Posterior cingulate gyrus (tissue), 11 donors: ENCODE measurements at regions of chr3 and their contacts with region 1.

Region 1: DNA sequence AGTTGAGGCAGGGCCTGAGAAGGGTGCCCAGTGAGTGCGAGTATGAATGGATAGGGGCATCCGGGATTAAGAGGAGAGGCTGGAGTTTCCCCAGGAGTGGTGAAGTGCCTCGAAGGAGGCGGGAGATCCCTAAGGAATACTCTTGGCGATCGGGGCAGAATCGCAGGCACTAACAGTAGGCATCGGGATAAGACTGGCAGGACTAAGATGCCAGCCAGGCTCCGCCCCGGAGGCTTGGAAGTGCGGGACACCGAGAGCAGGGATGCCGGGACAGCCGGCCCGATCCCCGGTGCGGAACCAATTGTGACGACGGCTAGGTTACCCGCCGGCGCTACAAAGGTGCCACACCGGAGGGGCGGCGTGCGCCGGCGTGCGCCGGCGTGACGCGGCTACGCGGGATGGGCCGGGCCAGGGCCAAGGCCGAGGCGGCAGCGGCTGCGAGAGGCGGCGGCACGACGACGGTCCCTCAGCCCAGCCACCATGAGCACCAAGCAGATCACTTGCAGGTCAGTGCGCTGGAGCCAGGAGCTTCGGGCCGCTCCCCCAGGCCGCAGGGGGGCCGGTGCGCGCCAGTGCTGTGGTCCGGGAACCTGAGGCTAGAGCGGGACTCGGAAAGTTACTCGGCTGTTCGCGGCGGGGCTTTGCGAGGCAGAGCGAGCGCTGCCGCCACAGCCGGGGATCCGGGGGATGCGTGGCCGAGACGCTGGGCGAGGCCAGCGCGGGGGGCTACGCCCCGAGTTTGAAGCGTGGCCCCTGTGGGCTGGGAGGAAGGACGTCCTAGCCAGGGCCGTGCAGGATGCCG is at the start of gene MKRN2:
- DNase-seq: peak; percentile 75 to 97 (median 86)

Region 2: DNA sequence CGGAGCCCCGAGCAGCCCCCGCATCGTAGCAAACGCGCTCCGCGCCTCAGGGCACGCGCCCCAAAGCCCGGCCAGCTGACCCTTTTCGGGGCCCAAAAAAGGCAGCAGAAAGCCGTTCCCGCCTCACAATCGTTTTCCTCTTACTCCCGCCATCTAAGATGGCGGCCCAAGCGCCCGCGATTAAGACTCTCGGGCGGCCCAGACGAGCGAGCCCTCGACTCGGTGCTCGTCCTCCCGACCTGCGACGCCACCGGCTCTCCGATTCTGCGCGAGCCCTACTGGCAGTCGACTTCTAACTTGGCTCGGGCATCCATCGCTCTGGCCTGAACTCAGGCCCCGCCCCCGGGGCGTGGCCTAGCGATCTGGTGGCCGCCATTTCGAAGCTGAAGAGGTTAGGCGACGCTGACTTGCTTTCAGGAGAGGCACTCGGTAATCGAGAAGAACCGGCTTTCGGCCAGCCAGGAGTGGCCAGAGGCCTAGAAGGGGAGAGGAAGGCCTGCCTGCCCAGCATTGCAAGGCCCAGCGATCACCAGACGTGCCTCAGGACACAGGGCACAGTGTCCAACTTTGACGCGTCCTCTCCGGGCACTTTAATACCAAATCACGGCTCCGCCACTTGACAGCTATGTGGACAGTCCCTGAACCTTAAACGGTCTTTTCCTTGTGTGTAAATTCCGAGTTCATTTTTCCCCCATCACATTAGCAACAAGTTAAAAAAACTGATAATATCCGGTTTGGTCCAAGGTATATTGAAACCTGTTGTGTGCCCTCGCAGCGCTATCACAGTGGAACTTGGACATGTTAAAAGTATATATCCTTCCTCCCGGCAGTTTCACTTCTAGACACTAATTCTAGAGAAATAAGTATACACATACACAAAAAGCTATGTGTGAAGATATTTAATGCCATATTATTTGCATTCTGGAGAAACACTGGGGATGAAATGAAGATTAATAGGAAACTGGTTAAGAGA is 107.3 kb after region 1 on chr3 and contains the start of gene RAF1:
- intact Hi-C with region 1: loop called (anchors 1 kb)
- DNase-seq: peak; percentile 96 to 100 (median 98)

Region 3: GRCh38 chr3:12719984-12720898 is 163.4 kb after region 1 on chr3:
- intact Hi-C with region 1: loop called (anchors 10 kb)
- DNase-seq: peak; percentile 36 to 93 (median 66)